ENCODE measurements at regions of chr11 and their contacts with region 1.

Region 1: GRCh38 chr11:61792310-61793085 is at the starts of genes FEN1 and TMEM258:
- DNase-seq: peak; percentile 85 to 95 (median 93)
- H3K4me3 ChIP-seq: peak within 1 kb of the TSS; percentile 70 to 100 (median 94)
- H3K27ac ChIP-seq: peak within 1 kb of the TSS; percentile 87 to 100 (median 99)
- H3K27me3 ChIP-seq: no peaks in the 10 kb centered on the region
- CTCF ChIP-seq: peak in 36 of 56 donors; percentile 4 to 56 (median 33)
- total RNA-seq, gene FEN1: 4.7 to 24.3 (median 13.8) TPM
- total RNA-seq, gene TMEM258: 40.6 to 123 (median 65.5) TPM

Region 2: DNA sequence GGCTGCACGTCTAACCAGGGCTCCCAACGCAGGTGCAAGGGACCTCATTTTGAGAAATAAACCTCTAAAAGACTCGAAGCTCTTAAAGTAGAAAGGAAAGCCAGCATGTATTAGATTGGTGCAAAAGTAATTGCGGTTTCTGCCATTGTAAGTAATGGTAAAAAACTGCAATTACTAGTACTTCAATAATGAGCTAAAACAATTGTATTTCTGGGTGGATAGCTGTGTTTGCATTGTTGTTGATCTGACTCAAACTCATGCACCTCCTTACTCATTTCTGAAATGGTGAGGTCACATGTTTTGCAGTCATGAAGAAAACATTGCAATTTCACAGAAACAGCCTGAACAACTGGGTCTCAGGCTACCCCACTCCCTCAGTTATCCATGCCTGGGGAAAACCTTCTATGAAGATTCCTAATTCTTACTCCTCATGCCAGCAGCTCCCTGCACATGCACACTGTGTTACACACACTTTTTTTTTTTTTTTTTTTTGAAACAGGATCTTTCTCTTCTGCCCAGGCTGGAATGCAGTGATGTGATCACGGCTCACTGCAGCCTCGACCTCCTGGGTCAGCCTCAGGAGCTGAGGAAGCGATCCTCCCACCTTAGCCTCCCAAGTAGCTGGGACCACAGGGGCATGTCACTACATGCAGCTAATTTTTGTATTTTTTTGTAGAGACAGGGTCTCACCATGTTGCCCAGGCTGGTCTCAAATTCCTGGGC is 522.0 kb before region 1 on chr11:
- intact Hi-C with region 1: no loop called
- DNase-seq: no peak
- H3K4me3 ChIP-seq: no peak overlapping the region
- H3K27ac ChIP-seq: no peak overlapping the region
- H3K27me3 ChIP-seq: no peaks in the 10 kb centered on the region
- CTCF ChIP-seq: no peak

Region 3: GRCh38 chr11:61602775-61603569 is 189.5 kb before region 1 on chr11:
- intact Hi-C with region 1: no loop called
- DNase-seq: peak in 9 of 10 donors; percentile 14 to 86 (median 62)
- H3K4me3 ChIP-seq: no peak overlapping the region
- H3K27ac ChIP-seq: peak overlapping the region in 54 of 59 donors; percentile 20 to 88 (median 66)
- H3K27me3 ChIP-seq: peaks cover 0 to 13% (median 0%) of the 10 kb centered on the region in 45 donors
- CTCF ChIP-seq: no peak

Region 4: DNA sequence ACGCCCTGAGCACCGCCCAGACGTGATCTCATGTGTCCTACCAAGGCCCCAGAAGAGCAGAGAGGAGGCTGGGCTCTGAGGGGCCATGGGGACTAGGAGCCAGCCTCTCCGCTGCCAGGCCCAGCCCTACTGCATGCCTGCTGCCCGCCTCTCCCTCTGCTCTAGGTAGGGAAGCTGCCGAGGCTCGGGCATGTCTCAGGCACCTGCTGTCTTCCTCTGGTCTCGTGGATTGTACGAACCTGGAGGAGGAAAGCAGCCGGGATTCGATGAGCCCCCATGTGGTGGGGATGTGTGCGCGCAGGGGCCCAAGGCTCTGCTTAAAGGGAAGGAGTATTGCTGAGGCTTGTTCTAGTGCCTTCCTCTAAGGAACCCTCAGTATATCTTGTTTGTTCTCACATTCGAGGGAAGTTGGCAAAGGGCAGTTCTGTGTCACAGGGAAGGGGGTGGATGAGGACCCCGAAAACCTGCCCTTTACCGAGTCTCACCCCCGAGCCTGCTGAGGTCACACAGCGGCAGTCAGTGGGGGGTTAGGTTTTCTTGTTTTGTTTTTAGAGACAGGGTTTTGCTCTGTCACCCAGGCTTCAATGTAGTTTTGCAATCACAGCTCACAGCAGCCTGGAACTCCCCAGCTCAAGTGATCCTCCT is 91.1 kb before region 1 on chr11:
- intact Hi-C with region 1: no loop called
- DNase-seq: peak in 2 of 10 donors; percentile 42 to 61
- H3K4me3 ChIP-seq: no peak overlapping the region
- H3K27ac ChIP-seq: peak overlapping the region in 44 of 59 donors; percentile 1 to 90 (median 59)
- H3K27me3 ChIP-seq: no peaks in the 10 kb centered on the region
- CTCF ChIP-seq: peak in 33 of 56 donors; percentile 12 to 46 (median 28)

Region 5: GRCh38 chr11:61776551-61777075 is 15.9 kb before region 1 on chr11:
- intact Hi-C with region 1: loop called in 1 of 2 experiments (anchors 2 kb)
- DNase-seq: peak in 8 of 10 donors; percentile 51 to 76 (median 67)
- H3K4me3 ChIP-seq: peak overlapping the region in 15 of 59 donors; percentile 30 to 59 (median 48)
- H3K27ac ChIP-seq: peak overlapping the region in 58 of 59 donors; percentile 25 to 99 (median 78)
- H3K27me3 ChIP-seq: no peaks in the 10 kb centered on the region
- CTCF ChIP-seq: peak in 55 of 56 donors; percentile 49 to 84 (median 70)

Region 6: DNA sequence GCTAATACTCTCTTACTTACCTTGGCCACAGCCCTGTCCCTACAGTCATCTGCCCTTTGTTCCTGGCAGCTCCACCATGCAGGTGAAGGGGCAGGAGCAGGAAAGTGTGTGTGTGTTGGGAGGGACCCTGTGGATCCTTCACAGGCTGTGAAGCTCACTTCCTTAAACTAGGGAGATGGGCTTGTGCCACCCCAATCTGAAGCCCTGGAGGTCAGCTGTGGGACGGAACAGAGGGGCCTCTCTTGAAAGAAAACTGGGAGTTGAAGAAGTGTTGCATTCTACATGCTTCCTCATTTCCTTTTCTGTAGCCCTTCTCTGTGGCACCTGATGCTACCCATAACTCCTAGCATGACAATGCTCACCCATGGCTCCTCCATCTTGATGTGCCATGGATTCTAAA is 12.6 kb after region 1 on chr11:
- intact Hi-C with region 1: no loop called
- DNase-seq: no peak
- H3K4me3 ChIP-seq: no peak overlapping the region
- H3K27ac ChIP-seq: peak overlapping the region in 4 of 59 donors; percentile 10 to 56 (median 28)
- H3K27me3 ChIP-seq: no peaks in the 10 kb centered on the region
- CTCF ChIP-seq: no peak

Region 7: DNA sequence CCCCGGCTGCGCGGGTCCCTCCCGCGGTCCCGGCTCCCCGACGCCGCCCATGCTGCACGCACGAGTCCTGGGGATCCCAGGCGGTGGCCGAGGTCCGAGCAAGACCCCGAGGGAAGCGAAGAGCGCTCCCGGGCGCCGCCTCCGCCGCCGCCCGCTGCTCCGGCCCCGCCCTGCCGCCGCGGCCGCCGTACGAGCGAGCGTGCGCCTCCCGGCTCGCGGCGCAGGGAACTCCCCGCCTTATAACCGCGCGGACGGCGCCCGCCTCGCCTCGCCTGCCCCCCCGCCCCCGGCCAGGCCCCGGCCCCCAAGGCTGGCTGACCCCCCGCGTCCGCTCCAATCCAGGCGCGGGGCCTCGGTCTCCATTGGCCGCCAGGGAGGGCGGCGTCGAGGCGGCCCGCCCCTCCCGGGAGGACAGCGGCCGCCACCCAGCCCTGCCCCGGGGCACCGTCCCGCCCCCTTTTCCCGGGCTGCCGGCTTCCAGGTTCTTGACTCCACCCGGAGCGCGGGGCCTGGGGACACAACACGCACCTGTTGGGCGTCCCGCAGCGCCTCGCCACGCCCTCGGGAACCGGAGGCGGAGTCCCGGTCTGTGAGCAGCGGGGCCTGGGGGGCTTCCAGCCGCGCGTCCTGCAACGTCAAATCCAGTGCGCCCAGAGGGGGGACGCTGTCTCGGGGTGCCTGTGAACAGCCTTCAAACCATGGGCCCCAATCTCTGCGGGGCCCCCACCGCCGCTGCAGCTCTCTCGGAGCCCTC is 99.0 kb after region 1 on chr11 and contains the start of gene FADS3:
- intact Hi-C with region 1: loop called (anchors 2 to 5 kb)
- DNase-seq: peak; percentile 66 to 90 (median 76)
- H3K4me3 ChIP-seq: peak within 1 kb of the TSS; percentile 52 to 97 (median 87)
- H3K27ac ChIP-seq: peak within 1 kb of the TSS; percentile 3 to 96 (median 91)
- H3K27me3 ChIP-seq: no peaks in the 10 kb centered on the region
- CTCF ChIP-seq: peak in 18 of 56 donors; percentile 3 to 59 (median 21)
- total RNA-seq, gene FADS3: 52.0 to 134 (median 87.6) TPM

Region 8: GRCh38 chr11:61947486-61948210 is 155.2 kb after region 1 on chr11:
- intact Hi-C with region 1: loop called (anchors 5 kb)
- DNase-seq: peak; percentile 77 to 95 (median 88)
- H3K4me3 ChIP-seq: no peak overlapping the region
- H3K27ac ChIP-seq: peak overlapping the region in 58 of 59 donors; percentile 52 to 100 (median 97)
- H3K27me3 ChIP-seq: no peaks in the 10 kb centered on the region
- CTCF ChIP-seq: peak; percentile 84 to 97 (median 94)

Region 9: GRCh38 chr11:62309991-62310390 is 517.5 kb after region 1 on chr11:
- intact Hi-C with region 1: loop called in 1 of 2 experiments (anchors 5 kb)
- DNase-seq: no peak
- H3K4me3 ChIP-seq: no peak overlapping the region
- H3K27ac ChIP-seq: no peak overlapping the region
- H3K27me3 ChIP-seq: peaks cover 0 to 9% (median 0%) of the 10 kb centered on the region in 45 donors
- CTCF ChIP-seq: no peak

Measured in dorsolateral prefrontal cortex (tissue), 120 donors.